ENCODE measurements at regions of chr4 and their contacts with region 1.

Region 1: DNA sequence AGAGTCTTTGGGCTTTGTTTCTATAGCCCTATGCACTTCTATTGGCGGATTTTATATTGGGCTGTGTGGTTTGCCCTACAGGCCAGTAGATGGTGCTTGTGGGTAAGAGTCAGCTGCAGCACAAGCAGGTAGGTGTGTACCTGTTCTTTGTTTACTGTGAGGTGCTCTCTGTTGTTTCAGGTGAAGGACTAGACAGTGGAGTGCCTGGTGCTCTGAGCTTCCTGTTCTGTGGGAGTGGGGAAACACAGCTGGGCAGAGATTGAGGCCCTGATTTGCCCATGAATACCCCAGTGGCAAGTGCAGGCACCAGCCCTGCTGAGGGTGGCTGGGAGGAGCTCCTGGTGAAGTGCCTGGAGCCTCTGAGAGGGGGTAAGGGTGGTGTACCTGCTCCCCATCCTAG is 26.3 kb upstream of the UCP1 start:
- DNase-seq: no peak
- H3K4me3 Mint-ChIP-seq: no peak overlapping the region
- H3K27ac Mint-ChIP-seq: no peak overlapping the region
- H3K4me1 Mint-ChIP-seq: peaks cover 6% of the 10 kb centered on the region
- H3K27me3 Mint-ChIP-seq: peaks cover 39% of the 10 kb centered on the region

Region 2: GRCh38 chr4:140556372-140557085 is 38.5 kb before region 1 on chr4:
- intact Hi-C with region 1: loop called (anchors 5 kb)
- DNase-seq: peak; percentile 10
- H3K4me3 Mint-ChIP-seq: no peak overlapping the region
- H3K27ac Mint-ChIP-seq: no peak overlapping the region
- H3K4me1 Mint-ChIP-seq: peaks cover 15% of the 10 kb centered on the region
- H3K27me3 Mint-ChIP-seq: peaks cover 25% of the 10 kb centered on the region

Measured in activated T-helper 2 cell treated with anti-CD3 and anti-CD28 coated beads, Interferon-gamma antibody, Interleukin-2, Interleukin-4, amounts not matched to agents 10 μg/mL and 5 μg/mL and 100 μg/mL, durations not matched to agents 14 hours and 24 hours and 36 hours (primary cell).